A673 (cell line): ENCODE measurements at regions of chr19 and their contacts with region 1.

Region 1: GRCh38 chr19:15154002-15154612 is 46.7 kb downstream of the NOTCH3 start:
- DNase-seq: peak; percentile 73
- H3K4me3 ChIP-seq: no peak overlapping the region
- H3K27ac ChIP-seq: no peak overlapping the region
- H3K4me1 ChIP-seq: no peaks in the 10 kb centered on the region
- H3K27me3 ChIP-seq: no peaks in the 10 kb centered on the region
- CTCF ChIP-seq: peak; percentile 79

Region 2: DNA sequence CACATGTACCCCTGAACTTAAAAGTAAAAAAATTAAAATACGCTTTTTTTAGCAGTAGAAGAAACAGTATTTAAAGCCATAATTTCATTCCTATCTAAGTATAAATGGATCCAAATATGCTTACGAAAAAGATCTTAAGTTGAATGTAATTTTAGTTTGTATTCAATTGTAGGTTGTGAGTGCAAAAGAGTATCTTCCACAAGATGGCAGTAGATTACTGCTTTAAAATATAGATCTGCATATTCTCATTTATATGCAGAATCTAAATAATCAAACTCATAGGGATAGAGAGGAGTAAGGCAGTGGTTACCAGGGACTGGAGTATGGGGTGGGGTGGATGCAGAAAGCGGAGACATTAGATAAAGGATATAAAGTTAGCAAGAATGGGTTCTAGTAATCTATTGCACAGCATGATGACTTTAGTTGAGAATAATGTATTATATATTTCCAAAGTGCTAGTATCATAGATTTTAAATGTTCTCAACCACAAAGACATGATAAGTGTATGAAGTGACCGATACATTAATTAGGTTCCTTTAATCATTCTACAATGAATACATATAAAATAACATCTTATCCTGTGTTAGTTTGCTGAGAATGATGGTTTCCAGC is 282.4 kb before region 1 on chr19:
- CTCF ChIA-PET with region 1: no interaction called
- POLR2A ChIA-PET with region 1: no interaction called
- intact Hi-C with region 1: loop called (anchors 2 kb)
- DNase-seq: peak; percentile 50
- H3K4me3 ChIP-seq: no peak overlapping the region
- H3K27ac ChIP-seq: no peak overlapping the region
- H3K4me1 ChIP-seq: no peaks in the 10 kb centered on the region
- H3K27me3 ChIP-seq: peaks cover 38% of the 10 kb centered on the region
- CTCF ChIP-seq: peak; percentile 75